Calu3 (cell line): ENCODE measurements at regions of chr1 and their contacts with region 1.

Region 1: DNA sequence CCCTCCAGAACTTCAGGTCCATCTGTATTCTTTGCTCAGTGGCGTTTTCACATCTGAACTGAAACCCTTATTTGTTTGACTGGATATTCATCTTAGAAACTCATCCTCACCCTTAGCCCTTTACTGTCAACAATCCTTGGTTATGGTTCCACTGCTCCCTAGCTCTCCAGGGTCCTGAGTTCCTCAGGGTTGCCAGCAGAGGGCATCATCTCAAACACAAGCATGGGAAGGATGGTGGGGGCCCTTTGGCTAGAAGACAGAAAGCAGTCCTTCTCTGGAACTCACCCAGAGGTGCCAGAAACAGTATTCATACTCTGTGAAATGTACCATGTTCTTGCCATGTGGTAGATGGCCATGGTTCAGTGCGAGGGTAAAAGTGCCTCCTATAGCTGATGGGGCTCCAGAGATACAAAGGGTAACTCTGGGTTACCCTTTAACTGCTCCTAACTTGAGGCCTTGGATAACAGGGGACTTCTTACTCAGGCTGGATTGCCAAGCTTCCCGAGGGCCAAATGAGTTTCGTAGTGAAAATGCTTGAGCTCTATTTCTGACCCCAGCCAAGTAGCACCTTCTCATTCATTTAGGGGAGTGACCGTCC is 11.3 kb downstream of the NCSTN start:
- DNase-seq: peak; percentile 53
- H3K4me3 Mint-ChIP-seq: no peak overlapping the region
- H3K27ac Mint-ChIP-seq: no peak overlapping the region
- H3K4me1 Mint-ChIP-seq: no peaks in the 10 kb centered on the region
- H3K27me3 Mint-ChIP-seq: no peaks in the 10 kb centered on the region
- CTCF ChIP-seq: peak; percentile 61

Region 2: DNA sequence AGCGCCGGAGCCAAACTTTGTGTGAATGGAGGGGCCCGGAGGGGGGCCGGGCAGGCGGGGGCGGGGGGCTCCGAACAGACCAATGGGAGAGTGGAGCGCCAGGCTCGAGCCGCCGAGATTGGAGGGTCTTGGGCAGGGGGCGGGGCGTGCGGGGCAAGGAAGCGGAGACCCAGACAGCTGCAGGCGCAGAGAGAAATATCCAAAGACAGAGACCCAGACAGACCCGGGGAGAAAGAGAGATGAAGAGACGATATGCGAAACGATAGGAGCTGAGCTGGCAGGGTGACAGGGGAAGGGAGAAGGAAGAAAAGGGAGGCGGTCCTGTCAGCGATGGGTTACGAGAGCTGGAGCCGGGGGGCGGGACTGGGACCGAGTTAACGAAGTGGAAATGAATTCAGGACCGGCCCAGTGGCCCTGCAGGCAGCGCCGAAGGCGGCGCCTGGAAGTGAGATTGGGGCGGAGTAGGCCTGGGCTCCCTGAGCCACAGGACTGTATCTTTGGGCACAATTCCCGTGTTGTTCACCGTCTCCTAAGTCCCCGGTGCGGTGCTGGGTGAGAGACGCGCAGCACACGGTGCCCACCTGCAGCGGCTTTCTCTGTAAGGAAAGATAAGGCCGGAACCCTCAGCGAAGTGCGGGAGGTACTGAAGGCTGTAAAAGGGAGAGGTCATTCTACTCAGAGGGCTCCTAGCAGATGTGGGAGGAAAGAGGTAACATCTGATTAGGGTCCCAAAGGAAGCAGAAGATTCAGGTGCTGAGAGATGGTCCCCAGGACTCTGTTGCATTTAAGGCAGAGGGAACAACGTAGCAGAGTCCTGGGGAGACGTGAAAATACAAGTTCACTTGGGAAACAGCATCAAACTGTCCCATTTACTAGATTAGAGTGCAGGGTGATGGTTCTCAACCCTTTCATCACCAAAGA is 284.0 kb before region 1 on chr1:
- CTCF ChIA-PET with region 1: no interaction called
- intact Hi-C with region 1: no loop called
- DNase-seq: peak; percentile 82
- H3K4me3 Mint-ChIP-seq: peak overlapping the region; percentile 93
- H3K27ac Mint-ChIP-seq: peak overlapping the region; percentile 28
- H3K4me1 Mint-ChIP-seq: peaks cover 10% of the 10 kb centered on the region
- H3K27me3 Mint-ChIP-seq: peaks cover 100% of the 10 kb centered on the region
- CTCF ChIP-seq: no peak

Region 3: DNA sequence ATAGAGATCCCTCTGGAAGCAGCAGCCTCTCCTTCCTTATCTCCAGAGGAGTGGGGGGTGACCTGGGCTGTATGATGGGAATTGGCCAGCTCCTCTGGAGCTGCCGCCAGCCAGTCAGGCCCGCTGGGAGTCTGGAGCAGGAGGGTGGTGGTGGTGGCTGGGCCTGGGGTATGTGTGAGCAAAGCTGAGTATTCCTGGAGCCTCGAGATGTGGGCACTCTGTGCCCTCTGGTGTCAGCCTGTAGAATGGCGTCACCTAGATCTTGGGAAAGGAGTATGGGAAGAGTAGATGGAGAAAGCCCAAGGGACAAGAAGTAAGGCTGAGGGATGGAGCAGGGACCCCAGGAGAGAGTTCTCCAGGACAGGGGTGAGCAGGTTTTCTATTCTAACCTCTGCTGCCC is 61.9 kb after region 1 on chr1:
- CTCF ChIA-PET with region 1: interaction called, 10 read pairs
- intact Hi-C with region 1: loop called (anchors 1 kb)
- DNase-seq: peak; percentile 60
- H3K4me3 Mint-ChIP-seq: no peak overlapping the region
- H3K27ac Mint-ChIP-seq: no peak overlapping the region
- H3K4me1 Mint-ChIP-seq: no peaks in the 10 kb centered on the region
- H3K27me3 Mint-ChIP-seq: peaks cover 72% of the 10 kb centered on the region
- CTCF ChIP-seq: peak; percentile 13

Region 4: GRCh38 chr1:161100556-161100955 is 746.1 kb after region 1 on chr1:
- CTCF ChIA-PET with region 1: no interaction called
- intact Hi-C with region 1: no loop called
- DNase-seq: no peak
- H3K4me3 Mint-ChIP-seq: no peak overlapping the region
- H3K27ac Mint-ChIP-seq: no peak overlapping the region
- H3K4me1 Mint-ChIP-seq: peaks cover 34% of the 10 kb centered on the region
- H3K27me3 Mint-ChIP-seq: no peaks in the 10 kb centered on the region
- CTCF ChIP-seq: no peak